Caco-2 (cell line): ENCODE measurements at regions of chr3 and their contacts with region 1.

Region 1: DNA sequence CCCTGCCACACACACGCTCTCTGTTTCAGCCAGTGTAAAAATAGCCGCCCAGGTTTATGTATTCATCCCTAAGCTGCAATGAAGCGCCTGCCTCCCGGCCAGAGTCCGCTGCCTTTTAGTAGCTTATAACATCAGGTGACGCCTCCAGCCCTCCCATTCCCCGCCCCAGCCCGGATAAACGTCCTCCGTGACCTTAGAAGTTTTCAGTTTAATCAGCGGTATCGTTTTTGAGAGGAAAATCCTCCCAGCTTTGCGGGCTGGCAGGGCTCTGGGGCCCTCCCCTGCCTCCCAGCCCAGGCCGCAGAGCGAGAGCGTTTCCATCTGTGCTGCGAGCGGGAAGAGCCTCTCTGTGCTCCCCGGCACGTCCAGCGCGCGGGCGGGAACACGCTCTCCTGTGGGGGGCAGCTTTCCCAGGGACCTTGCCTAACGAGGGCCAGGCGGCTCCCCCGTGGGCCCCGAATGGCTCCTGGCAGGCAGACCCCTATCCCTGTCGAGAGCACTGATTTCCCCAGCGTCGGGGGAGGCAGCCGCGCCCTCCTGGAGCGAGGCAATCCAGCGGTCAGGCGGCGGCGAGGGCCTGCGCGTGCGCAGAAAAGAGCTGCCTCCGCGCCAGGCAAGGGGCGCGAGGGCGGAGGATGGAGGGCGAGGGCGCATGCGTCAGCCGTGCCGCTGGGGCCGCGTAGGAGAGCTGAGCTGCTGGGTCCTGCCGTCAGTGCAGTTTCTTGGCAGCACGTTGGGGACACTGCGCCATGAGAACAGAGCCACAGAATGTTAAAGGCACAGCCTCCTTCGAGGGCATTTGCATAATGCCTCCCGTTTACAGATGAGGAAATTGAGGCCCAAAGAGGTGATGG is 71.1 kb downstream of the CCNL1 start:
- DNase-seq: peak; percentile 95 to 97
- H3K4me3 ChIP-seq: peak overlapping the region; percentile 58
- H3K4me3 Mint-ChIP-seq: peak overlapping the region; percentile 81
- H3K27ac Mint-ChIP-seq: peak overlapping the region; percentile 89
- H3K4me1 ChIP-seq: peaks cover 26% of the 10 kb centered on the region
- H3K4me1 Mint-ChIP-seq: peaks cover 26% of the 10 kb centered on the region
- H3K27me3 ChIP-seq: no peaks in the 10 kb centered on the region
- H3K27me3 Mint-ChIP-seq: no peaks in the 10 kb centered on the region
- CTCF ChIP-seq: no peak

Region 2: DNA sequence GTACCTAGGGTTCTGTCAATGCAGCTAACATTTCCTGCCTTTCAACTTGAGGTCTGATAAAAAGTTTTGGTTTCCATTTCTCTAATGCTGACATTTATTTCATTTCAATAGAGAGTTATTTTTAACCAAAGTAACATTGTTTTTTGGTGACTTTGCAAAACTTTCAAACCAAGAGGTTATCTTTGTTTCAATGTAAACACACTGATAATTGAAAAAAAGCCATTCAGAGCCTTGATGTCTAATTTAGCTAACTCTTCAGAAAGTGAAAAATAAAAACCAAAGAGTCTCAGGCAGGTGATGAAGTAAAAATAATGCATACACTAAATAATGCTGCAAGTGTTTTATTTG is 424.0 kb before region 1 on chr3:
- CTCF ChIA-PET with region 1: no interaction called
- POLR2A ChIA-PET with region 1: no interaction called
- intact Hi-C with region 1: no loop called
- DNase-seq: no peak
- H3K4me3 ChIP-seq: no peak overlapping the region
- H3K4me3 Mint-ChIP-seq: no peak overlapping the region
- H3K27ac Mint-ChIP-seq: no peak overlapping the region
- H3K4me1 ChIP-seq: peaks cover 14% of the 10 kb centered on the region
- H3K4me1 Mint-ChIP-seq: peaks cover 12% of the 10 kb centered on the region
- H3K27me3 ChIP-seq: no peaks in the 10 kb centered on the region
- H3K27me3 Mint-ChIP-seq: no peaks in the 10 kb centered on the region
- CTCF ChIP-seq: no peak

Region 3: DNA sequence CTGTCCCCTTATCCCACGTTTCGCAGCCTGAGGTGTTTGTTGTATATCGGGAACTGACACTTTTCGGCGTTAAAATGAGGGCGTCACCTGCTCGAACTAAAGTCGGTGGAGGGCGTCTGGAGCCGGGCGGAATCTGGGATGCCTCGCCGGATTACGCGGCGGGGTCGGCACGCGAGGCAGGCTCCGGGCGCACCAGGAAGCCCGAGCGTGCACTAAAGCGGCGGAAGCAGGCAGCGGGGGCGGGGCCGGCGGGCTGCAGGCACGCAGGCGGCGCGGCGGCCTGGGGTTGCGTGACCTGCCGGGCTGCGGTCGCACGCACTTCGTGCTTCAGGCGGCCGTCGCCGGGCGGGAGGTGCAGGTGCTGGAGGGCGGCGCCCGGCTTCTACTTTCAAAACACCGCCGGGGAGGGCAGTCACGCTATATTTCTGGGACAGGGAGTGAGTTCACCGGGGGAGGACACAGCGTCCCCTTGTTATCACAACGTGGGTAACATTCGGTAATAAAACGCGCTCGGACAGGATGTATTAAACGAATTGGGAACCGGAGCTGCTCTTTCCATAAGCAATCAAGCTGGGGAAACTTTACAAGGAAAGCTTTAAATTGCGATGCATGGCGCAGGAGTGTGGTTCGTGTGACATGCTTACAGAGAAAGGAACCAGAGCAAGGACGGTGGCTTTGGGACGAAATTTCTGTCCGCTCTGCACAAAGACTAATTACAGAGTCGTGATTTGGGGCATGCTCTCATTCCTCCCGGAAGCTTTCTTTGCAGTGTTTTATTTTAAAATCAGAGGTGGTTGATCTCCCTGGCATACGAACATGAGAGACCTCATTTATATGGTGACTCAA is 271.8 kb before region 1 on chr3:
- CTCF ChIA-PET with region 1: no interaction called
- POLR2A ChIA-PET with region 1: interaction called, 10 read pairs
- intact Hi-C with region 1: no loop called
- DNase-seq: peak; percentile 94 to 96
- H3K4me3 ChIP-seq: peak overlapping the region; percentile 84
- H3K4me3 Mint-ChIP-seq: peak overlapping the region; percentile 90
- H3K27ac Mint-ChIP-seq: peak overlapping the region; percentile 91
- H3K4me1 ChIP-seq: peaks cover 43% of the 10 kb centered on the region
- H3K4me1 Mint-ChIP-seq: peaks cover 14% of the 10 kb centered on the region
- H3K27me3 ChIP-seq: no peaks in the 10 kb centered on the region
- H3K27me3 Mint-ChIP-seq: no peaks in the 10 kb centered on the region
- CTCF ChIP-seq: no peak

Region 4: DNA sequence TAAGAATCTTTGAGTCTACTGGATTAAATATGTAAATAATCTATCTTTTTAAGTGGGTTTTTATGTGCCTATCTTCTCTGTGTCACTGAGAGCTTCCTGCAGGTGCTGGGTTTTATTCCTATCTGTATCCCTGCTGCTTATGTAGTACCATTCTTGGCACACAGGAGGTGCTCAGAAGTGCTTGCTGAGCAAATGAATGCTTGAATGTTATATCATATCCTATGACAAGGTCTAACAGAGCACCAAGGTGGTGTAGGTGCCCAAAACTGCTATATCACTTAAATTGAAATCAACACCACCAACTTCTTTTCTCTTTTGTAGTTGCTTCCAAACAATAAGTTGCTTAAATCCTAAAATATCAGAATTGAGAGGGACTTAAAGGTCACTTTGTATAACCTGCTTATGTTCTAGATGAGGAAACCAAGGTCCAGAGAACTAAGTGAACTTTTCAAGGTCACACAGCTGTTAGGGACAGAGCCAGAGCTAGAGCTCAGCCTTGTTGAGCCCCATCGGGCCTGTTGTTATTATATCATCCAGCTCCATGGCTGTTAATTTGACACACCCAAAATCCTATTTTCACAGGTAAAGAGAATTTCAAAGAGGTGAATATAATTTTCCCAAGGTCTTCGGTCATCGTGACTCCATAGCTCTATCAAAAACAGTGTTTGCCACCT is 25.1 kb after region 1 on chr3:
- CTCF ChIA-PET with region 1: interaction called, 19 read pairs
- POLR2A ChIA-PET with region 1: interaction called, 75 read pairs
- intact Hi-C with region 1: loop called (anchors 1 kb)
- DNase-seq: no peak
- H3K4me3 ChIP-seq: no peak overlapping the region
- H3K4me3 Mint-ChIP-seq: no peak overlapping the region
- H3K27ac Mint-ChIP-seq: no peak overlapping the region
- H3K4me1 ChIP-seq: peaks cover 27% of the 10 kb centered on the region
- H3K4me1 Mint-ChIP-seq: peaks cover 16% of the 10 kb centered on the region
- H3K27me3 ChIP-seq: no peaks in the 10 kb centered on the region
- H3K27me3 Mint-ChIP-seq: no peaks in the 10 kb centered on the region
- CTCF ChIP-seq: peak in 1 of 2 experiments; percentile 6

Region 5: GRCh38 chr3:157130467-157131251 is 41.8 kb after region 1 on chr3:
- CTCF ChIA-PET with region 1: interaction called, 26 read pairs
- POLR2A ChIA-PET with region 1: interaction called, 43 read pairs
- intact Hi-C with region 1: loop called (anchors 1 kb)
- DNase-seq: peak; percentile 89 to 94
- H3K4me3 ChIP-seq: peak overlapping the region; percentile 13
- H3K4me3 Mint-ChIP-seq: peak overlapping the region; percentile 64
- H3K27ac Mint-ChIP-seq: peak overlapping the region; percentile 95
- H3K4me1 ChIP-seq: peaks cover 64% of the 10 kb centered on the region
- H3K4me1 Mint-ChIP-seq: peaks cover 33% of the 10 kb centered on the region
- H3K27me3 ChIP-seq: no peaks in the 10 kb centered on the region
- H3K27me3 Mint-ChIP-seq: no peaks in the 10 kb centered on the region
- CTCF ChIP-seq: peak; percentile 55 to 76

Region 6: DNA sequence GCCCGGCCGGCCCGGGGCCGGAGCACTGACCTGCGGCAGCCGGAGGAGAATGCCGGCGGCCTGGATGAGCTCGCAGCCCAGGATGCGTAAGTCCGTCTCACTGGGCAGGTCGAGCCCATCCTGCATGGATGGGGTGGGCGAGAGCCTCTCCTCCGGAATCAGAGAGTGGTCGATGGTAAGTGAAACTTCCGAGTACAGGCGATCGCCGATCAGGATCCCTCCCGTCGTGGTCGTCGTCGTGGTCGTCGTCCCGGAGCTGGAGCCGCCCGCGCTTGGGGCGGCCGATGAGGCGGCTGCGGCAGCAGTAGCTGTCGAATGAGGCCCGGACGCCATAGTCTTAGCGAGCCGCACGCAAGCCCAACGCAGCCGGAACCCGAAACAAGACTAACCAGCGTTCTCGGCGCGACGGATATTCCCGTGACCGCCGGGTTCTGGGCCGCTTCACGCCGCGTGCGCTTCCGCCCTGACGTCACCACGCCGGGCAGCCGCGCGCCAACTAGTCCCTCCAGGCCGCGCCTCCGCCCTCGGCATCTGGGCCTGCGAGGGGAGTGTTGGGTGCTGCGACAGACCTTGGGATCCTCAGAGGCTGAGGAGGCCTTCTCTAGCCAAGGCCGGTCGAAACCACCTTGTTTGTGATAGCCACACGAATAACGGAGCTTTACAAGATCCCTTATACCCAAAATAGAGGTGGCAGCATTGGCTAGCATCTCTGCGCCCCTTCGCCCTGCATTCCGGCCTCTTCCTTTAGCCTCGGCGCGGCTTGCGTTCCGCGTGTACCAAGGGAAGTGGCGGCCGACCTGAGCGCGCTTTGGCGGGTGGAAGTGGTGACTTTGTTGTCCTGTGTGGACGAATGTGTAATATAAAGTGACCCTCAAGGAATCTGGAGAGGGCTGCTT is 71.2 kb after region 1 on chr3 and contains the start of gene CCNL1:
- CTCF ChIA-PET with region 1: interaction called, 3 read pairs
- POLR2A ChIA-PET with region 1: interaction called, 12 read pairs
- intact Hi-C with region 1: no loop called
- DNase-seq: peak; percentile 94 to 97
- H3K4me3 ChIP-seq: peak within 1 kb of the TSS; percentile 98
- H3K4me3 Mint-ChIP-seq: peak within 1 kb of the TSS; percentile 92
- H3K27ac Mint-ChIP-seq: peak within 1 kb of the TSS; percentile 96
- H3K4me1 ChIP-seq: peaks cover 41% of the 10 kb centered on the region
- H3K4me1 Mint-ChIP-seq: peaks cover 12% of the 10 kb centered on the region
- H3K27me3 ChIP-seq: no peaks in the 10 kb centered on the region
- H3K27me3 Mint-ChIP-seq: no peaks in the 10 kb centered on the region
- CTCF ChIP-seq: no peak
- total RNA-seq, gene CCNL1: 108 and 114 TPM in 2 replicates